ENCODE measurements at regions of chr20 and their contacts with region 1.

Region 1: DNA sequence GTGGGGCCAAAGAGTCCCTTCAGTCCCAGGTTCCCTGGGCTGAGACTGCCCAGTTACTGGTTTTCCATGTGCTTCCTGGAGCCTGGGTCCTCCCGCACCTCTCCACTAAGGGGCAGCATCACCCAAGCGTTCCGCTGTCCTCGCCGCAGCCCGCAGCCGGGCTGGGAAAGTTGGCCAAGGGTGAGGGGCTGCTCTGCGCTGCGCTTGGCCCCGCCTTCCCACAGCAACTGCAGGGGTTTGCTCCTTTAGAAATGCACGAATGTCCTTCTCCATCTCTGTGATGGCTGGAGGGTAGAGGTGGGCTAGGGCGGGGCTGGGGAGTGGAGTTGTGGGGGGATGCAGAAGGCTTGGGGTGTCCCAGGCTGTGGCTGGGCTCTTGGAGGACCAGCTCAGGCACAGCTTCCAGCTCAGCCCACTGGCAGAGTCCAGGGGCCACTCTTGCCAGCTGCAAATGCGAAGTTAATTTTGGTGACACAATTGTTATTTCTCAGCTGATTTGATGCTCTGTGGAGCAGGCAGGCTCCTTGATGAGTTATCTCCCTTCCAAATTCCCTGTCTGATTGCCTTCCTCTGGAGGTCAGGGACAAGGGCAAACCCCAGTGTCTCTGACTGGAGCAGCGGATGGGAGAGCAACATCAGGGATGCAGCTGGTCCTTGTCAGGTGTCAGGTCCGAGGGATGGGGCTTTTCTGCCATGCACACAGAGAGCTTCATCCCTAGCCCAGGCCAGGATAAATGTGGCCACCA is 63.2 kb downstream of the NOL4L start:
- DNase-seq: peak; percentile 72
- ATAC-seq: peak; percentile 78
- H3K4me3 ChIP-seq: no peak overlapping the region
- H3K27ac ChIP-seq: no peak overlapping the region
- H3K4me1 ChIP-seq: peaks cover 48% of the 10 kb centered on the region
- H3K27me3 ChIP-seq: no peaks in the 10 kb centered on the region
- CTCF ChIP-seq: peak; percentile 100
- EP300 ChIP-seq: peak in 1 of 2 experiments; percentile 15; a peak in 1 of 4 replicates
- POLR2A ChIP-seq: no peak
- RAD21 ChIP-seq: peak; percentile 100

Region 2: GRCh38 chr20:32249030-32249738 is 272.8 kb before region 1 on chr20:
- CTCF ChIA-PET with region 1: no interaction called
- POLR2A ChIA-PET with region 1: no interaction called
- in situ Hi-C with region 1: no loop called
- intact Hi-C with region 1: no loop called
- DNase-seq: no peak
- ATAC-seq: no peak
- H3K4me3 ChIP-seq: no peak overlapping the region
- H3K27ac ChIP-seq: no peak overlapping the region
- H3K4me1 ChIP-seq: peaks cover 43% of the 10 kb centered on the region
- H3K27me3 ChIP-seq: no peaks in the 10 kb centered on the region
- CTCF ChIP-seq: no peak
- EP300 ChIP-seq: no peak
- POLR2A ChIP-seq: no peak
- RAD21 ChIP-seq: no peak

Region 3: GRCh38 chr20:32541323-32542258 is 19.6 kb after region 1 on chr20:
- CTCF ChIA-PET with region 1: interaction called, 11 read pairs
- POLR2A ChIA-PET with region 1: interaction called, 197 read pairs
- in situ Hi-C with region 1: no loop called
- intact Hi-C with region 1: loop called (anchors 1 kb)
- DNase-seq: peak; percentile 91
- ATAC-seq: peak; percentile 77
- H3K4me3 ChIP-seq: peak overlapping the region in 2 of 3 experiments; percentile 7 to 54; a peak in 4 of 6 replicates
- H3K27ac ChIP-seq: peak overlapping the region; percentile 90
- H3K4me1 ChIP-seq: peaks cover 98% of the 10 kb centered on the region
- H3K27me3 ChIP-seq: no peaks in the 10 kb centered on the region
- CTCF ChIP-seq: peak; percentile 59
- EP300 ChIP-seq: peak; percentile 84 to 91; a peak in 3 of 4 replicates
- POLR2A ChIP-seq: peak in 1 of 2 experiments; percentile 72; a peak in 1 of 4 replicates
- RAD21 ChIP-seq: peak; percentile 93

Region 4: DNA sequence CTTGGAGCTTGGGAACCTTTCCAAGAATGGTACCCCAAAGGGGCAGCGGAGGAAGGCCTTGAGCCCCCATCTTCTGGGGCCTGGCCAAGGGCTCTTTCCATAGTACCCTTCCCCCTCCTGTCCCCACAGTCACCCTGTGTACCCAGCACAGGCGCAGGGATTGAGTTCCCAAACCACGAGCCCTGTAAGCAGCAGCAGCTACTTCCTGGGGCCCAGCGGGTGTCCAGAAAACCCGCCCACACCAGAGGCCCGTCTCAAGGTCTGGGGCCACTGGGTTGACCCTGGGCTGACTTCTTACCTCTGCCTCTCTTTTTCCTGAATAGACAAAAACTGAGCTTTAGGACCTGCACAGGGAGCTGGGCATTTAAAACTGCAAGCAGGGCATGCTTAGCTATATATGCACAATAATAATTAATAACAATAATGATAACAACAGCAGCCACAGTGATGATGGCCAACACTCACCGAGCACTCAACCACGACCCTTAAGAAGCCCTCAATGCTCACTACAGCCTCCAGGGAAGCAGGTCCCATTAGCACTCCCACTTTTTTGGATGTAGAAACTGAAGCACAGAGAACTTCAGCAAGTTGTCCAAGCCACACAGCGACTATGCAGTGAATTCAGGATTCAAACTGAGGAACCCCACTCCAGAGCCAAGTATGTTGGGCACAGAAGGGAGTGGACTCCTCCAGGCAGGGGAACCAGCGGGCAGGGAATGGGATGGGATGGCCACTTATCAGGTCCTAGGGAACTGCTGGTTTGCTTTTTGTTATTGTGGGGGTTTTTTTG is 48.6 kb after region 1 on chr20:
- CTCF ChIA-PET with region 1: no interaction called
- POLR2A ChIA-PET with region 1: interaction called, 11 read pairs
- in situ Hi-C with region 1: no loop called
- intact Hi-C with region 1: no loop called
- DNase-seq: no peak
- ATAC-seq: peak; percentile 6; the same call in 2 of the 3 replicates
- H3K4me3 ChIP-seq: no peak overlapping the region
- H3K27ac ChIP-seq: no peak overlapping the region
- H3K4me1 ChIP-seq: peaks cover 87% of the 10 kb centered on the region
- H3K27me3 ChIP-seq: no peaks in the 10 kb centered on the region; a peak in 1 of 5 replicates
- CTCF ChIP-seq: no peak
- EP300 ChIP-seq: peak in 1 of 2 experiments; percentile 50; a peak in 2 of 4 replicates
- POLR2A ChIP-seq: no peak
- RAD21 ChIP-seq: no peak

Region 5: DNA sequence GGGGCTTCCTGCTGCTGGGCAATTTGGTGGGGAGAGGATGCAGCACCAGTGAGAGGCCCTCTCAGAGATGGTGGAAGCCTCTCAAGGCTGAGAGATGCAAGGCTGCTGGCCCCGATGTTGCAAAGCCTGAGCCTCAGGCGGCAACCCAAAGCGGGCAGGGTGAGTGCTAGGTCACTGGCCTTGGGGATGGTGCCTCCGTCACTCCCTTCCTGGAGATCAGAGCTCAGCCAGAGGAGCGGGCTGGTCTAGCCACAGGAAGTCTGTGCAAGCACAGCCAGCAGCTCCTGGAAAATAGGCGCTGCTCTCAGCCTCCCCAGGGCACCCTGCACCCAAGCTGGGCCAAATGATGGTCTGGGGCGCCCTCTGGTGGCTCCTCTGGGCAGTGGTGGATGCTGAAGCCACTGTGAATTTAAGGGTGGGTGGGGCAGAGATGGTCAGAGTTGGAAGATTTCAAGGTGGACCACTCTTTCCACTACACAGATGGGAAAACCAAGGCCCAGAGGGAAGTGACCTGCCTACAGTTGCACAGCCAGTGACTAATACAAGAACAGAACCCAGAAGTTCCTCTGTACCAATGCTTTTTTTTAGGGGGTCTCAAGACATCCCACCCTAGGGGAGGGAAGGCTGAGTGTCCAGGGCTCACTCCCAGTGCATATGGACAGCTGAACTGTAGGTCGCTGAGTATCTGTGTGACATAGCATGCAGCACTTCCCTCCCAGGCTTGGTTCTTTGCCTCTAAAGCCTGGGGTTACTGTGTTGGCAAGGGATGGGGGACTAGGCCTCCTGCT is 131.0 kb after region 1 on chr20:
- CTCF ChIA-PET with region 1: interaction called, 170 read pairs
- POLR2A ChIA-PET with region 1: interaction called, 35 read pairs
- in situ Hi-C with region 1: loop called (anchors 5 kb)
- intact Hi-C with region 1: loop called (anchors 1 kb)
- DNase-seq: peak; percentile 89
- ATAC-seq: peak; percentile 98
- H3K4me3 ChIP-seq: peak overlapping the region in 1 of 3 experiments; percentile 45; a peak in 1 of 6 replicates
- H3K27ac ChIP-seq: no peak overlapping the region
- H3K4me1 ChIP-seq: peaks cover 18% of the 10 kb centered on the region
- H3K27me3 ChIP-seq: peaks cover 2 to 30% of the 10 kb centered on the region in 2 experiments; a peak in 4 of 5 replicates
- CTCF ChIP-seq: peak; percentile 100
- EP300 ChIP-seq: peak in 1 of 2 experiments; percentile 56; a peak in 2 of 4 replicates
- POLR2A ChIP-seq: no peak
- RAD21 ChIP-seq: peak; percentile 100

Region 6: DNA sequence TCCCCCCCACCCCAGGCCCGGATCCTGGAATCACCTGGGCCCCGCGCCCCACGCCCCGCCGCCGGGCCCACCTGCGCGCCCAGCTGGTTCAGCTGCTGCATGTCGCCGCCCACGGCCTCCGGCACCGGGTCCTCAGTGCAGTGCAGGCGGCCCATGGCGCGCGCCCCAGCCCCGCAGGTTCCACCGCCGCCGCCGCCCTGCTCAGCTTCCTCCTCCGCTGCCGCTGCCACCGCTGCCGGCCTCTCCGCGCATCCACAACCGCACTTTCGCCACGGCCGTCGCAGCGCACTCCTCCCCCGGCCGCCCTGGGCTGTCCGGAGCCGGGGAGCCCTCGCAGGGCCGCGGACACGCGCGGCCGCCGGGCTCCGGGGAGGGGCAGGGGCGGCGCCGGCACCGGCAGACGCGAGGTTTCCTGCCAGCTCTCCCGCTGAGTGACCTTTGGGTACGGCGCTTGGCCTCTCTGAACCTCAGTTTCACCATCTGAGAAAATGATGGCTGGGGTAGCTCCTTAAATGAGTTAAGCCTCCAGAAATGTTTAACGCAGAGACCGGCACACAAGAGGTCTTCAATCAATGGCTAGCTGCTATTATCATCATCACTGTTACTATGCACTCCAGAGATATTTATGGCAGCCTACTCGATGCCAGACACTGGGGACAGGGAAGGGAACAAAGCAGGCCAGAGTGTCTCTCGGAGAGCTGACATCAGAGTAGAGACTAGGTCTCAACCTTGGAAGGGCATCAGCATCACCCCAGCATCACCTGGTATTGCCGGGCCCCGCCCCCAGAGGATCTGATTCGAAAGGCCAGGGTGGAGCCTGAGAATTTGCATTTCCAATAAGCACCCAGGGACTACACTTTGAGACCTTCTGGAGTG is 221.5 kb after region 1 on chr20 and contains the start of gene COMMD7:
- CTCF ChIA-PET with region 1: no interaction called
- POLR2A ChIA-PET with region 1: no interaction called
- in situ Hi-C with region 1: no loop called
- intact Hi-C with region 1: no loop called
- DNase-seq: peak; percentile 50
- ATAC-seq: peak; percentile 88
- H3K4me3 ChIP-seq: peak within 1 kb of the TSS; percentile 80 to 99 (median 94)
- H3K27ac ChIP-seq: peak within 1 kb of the TSS; percentile 44
- H3K4me1 ChIP-seq: peaks cover 54% of the 10 kb centered on the region
- H3K27me3 ChIP-seq: no peaks in the 10 kb centered on the region; a peak in 1 of 5 replicates
- CTCF ChIP-seq: no peak
- EP300 ChIP-seq: no peak
- POLR2A ChIP-seq: peak; percentile 3 to 44; a peak in 2 of 4 replicates
- RAD21 ChIP-seq: peak; percentile 79
- total RNA-seq, gene COMMD7: 42.1 and 50.7 TPM in 2 replicates

Region 7: DNA sequence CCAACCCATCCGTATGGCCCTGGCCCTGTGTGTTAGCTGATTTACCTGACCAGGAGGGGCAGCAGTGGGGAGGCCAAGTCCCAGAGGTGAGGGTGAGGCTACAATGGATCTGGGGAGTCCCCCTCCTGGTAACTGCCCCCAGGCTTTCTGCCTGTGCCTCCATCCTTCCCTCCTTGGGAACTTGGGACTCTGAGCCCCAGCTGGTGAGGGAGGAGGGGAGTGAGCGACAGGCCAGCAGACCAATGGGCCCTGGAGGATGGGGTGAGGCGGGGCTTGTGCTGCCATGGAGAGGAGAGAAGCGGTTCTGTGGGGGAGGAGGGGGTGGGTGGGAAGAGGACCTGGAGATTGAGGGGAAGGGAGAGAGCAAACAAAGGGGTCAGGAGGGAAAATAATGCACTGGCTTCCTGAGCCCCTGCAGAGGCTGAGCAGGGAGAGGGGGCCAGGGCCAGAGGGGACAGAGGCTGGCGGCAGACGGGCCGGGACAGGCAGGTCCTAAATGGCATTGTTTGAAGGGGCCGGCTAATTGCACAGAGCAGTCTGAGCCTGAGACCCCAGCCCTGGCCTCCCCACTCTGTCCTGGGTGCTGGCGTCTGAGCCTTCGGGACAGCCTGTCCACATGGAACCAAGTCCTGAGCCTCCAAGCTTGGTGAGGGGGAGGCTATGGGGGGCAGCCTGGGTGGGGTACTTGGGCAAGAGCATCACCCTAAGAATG is 257.7 kb after region 1 on chr20:
- CTCF ChIA-PET with region 1: interaction called, 5 read pairs
- POLR2A ChIA-PET with region 1: no interaction called
- in situ Hi-C with region 1: loop called (anchors 25 kb)
- intact Hi-C with region 1: loop called (anchors 10 kb)
- DNase-seq: no peak
- ATAC-seq: peak; percentile 7; the same call in 1 of the 3 replicates
- H3K4me3 ChIP-seq: no peak overlapping the region
- H3K27ac ChIP-seq: no peak overlapping the region
- H3K4me1 ChIP-seq: peaks cover 35% of the 10 kb centered on the region
- H3K27me3 ChIP-seq: no peaks in the 10 kb centered on the region
- CTCF ChIP-seq: no peak; the same call in 1 of the 2 replicates
- EP300 ChIP-seq: no peak
- POLR2A ChIP-seq: no peak
- RAD21 ChIP-seq: no peak